ENCODE measurements at regions of chr21 and their contacts with region 1.

Region 1: GRCh38 chr21:15713412-15713811 is 16.4 kb upstream of the USP25 start:
- DNase-seq: no peak
- ATAC-seq: no peak
- H3K4me3 ChIP-seq: no peak overlapping the region
- H3K27ac ChIP-seq: no peak overlapping the region
- H3K4me1 ChIP-seq: no peaks in the 10 kb centered on the region
- H3K27me3 ChIP-seq: no peaks in the 10 kb centered on the region
- CTCF ChIP-seq: no peak

Region 2: GRCh38 chr21:15763359-15763758 is 49.9 kb after region 1 on chr21:
- CTCF ChIA-PET with region 1: interaction called, 11 read pairs
- POLR2A ChIA-PET with region 1: no interaction called
- in situ Hi-C with region 1: no loop called
- intact Hi-C with region 1: no loop called
- DNase-seq: no peak
- ATAC-seq: no peak
- H3K4me3 ChIP-seq: no peak overlapping the region
- H3K27ac ChIP-seq: no peak overlapping the region
- H3K4me1 ChIP-seq: no peaks in the 10 kb centered on the region; the same call in 1 of the 2 replicates
- H3K27me3 ChIP-seq: no peaks in the 10 kb centered on the region
- CTCF ChIP-seq: no peak